ENCODE measurements at regions of chr20 and their contacts with region 1.

Region 1: GRCh38 chr20:46040902-46041535 is 12.0 kb downstream of the SLC12A5 start:
- DNase-seq: peak; percentile 43
- H3K4me3 ChIP-seq: no peak overlapping the region
- H3K27ac ChIP-seq: no peak overlapping the region
- H3K4me1 ChIP-seq: no peaks in the 10 kb centered on the region
- H3K27me3 ChIP-seq: no peaks in the 10 kb centered on the region
- CTCF ChIP-seq: no peak
- POLR2A ChIP-seq: no peak

Region 2: GRCh38 chr20:45969347-45970242 is 71.4 kb before region 1 on chr20:
- CTCF ChIA-PET with region 1: no interaction called
- POLR2A ChIA-PET with region 1: no interaction called
- dilution Hi-C with region 1: no loop called
- intact Hi-C with region 1: no loop called
- DNase-seq: peak; percentile 43
- H3K4me3 ChIP-seq: peak overlapping the region in 1 of 3 experiments; percentile 79
- H3K27ac ChIP-seq: no peak overlapping the region
- H3K4me1 ChIP-seq: peaks cover 14% of the 10 kb centered on the region
- H3K27me3 ChIP-seq: no peaks in the 10 kb centered on the region
- CTCF ChIP-seq: peak; percentile 65 to 75
- POLR2A ChIP-seq: no peak

Region 3: DNA sequence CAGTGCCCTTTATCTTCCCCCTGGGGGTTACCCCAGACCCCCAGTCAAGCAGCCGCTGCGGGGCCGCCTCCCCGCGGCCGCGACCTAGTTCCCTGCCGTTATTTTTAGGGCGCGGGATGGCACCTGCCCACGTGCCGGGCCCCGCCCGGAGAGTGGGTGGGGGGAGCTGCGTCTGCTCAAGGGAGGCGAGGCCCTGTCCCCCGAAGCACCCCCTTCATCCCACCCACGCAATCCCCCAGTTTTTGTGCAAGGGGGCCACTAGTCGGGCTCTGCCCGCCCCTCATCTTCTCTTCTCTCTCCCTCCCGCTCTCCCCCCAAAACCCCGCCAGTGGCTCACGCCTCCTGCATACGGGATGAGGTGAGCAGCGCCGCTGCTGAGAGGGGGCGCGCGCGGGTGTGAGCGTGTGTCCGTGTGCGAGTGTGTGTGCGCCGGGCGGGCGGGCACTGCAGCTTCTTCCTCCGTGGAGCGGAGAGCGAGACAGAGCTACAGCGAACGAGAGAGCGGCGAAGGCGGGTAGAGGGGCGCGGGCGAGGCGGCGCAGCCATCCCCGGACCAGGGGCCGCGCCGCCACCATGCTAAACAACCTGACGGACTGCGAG is 12.1 kb before region 1 on chr20 and contains the start of gene SLC12A5:
- CTCF ChIA-PET with region 1: interaction called, 7 read pairs
- POLR2A ChIA-PET with region 1: no interaction called
- dilution Hi-C with region 1: no loop called
- intact Hi-C with region 1: loop called (anchors 1 kb)
- DNase-seq: no peak
- H3K4me3 ChIP-seq: no peak within 1 kb of the TSS
- H3K27ac ChIP-seq: no peak within 1 kb of the TSS
- H3K4me1 ChIP-seq: no peaks in the 10 kb centered on the region
- H3K27me3 ChIP-seq: peaks cover 45 to 47% of the 10 kb centered on the region in 2 experiments
- CTCF ChIP-seq: no peak
- POLR2A ChIP-seq: no peak
- total RNA-seq, gene SLC12A5: 1.6 and 1.8 TPM in 2 replicates